ENCODE measurements at regions of chr4 and their contacts with region 1.

Region 1: GRCh38 chr4:168153596-168154440 is 61.5 kb downstream of the ANXA10 start:
- DNase-seq: peak; percentile 71
- H3K4me3 Mint-ChIP-seq: no peak overlapping the region
- H3K27ac Mint-ChIP-seq: no peak overlapping the region
- H3K4me1 Mint-ChIP-seq: no peaks in the 10 kb centered on the region
- H3K27me3 Mint-ChIP-seq: no peaks in the 10 kb centered on the region
- CTCF ChIP-seq: peak; percentile 65

Region 2: DNA sequence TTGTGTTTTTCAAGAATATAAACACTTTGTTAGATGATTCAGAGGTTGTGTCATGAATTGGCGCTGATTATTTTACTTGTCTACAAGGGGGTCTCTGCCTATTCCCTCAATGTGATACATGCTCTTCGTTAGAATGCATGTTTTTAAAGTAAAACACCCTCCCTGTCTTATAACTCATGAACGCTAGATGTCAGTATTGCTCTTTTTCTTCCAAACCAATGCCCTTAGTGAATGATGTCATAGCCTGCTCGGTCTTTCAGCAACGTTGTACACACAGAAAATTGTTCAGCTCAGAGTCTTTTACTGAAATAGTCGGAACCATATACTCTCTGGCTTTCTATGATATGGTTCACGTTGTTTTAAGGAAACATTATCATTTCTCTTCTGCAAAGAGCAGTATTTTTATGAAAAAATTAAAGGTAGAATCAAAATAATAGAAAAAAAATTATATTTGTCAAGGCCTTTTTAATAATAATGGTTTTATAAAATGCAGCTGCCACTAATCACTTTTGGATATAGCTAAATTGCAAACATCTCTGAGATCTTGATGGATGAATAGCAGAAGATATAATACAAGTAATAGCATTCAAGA is 1987.9 kb before region 1 on chr4:
- CTCF ChIA-PET with region 1: no interaction called
- POLR2A ChIA-PET with region 1: no interaction called
- intact Hi-C with region 1: loop called (anchors 5 kb)
- DNase-seq: peak; percentile 84
- H3K4me3 Mint-ChIP-seq: no peak overlapping the region
- H3K27ac Mint-ChIP-seq: no peak overlapping the region
- H3K4me1 Mint-ChIP-seq: peaks cover 6% of the 10 kb centered on the region
- H3K27me3 Mint-ChIP-seq: no peaks in the 10 kb centered on the region
- CTCF ChIP-seq: peak; percentile 79

Region 3: GRCh38 chr4:167290678-167291077 is 863.1 kb before region 1 on chr4:
- CTCF ChIA-PET with region 1: interaction called, 5 read pairs
- POLR2A ChIA-PET with region 1: no interaction called
- intact Hi-C with region 1: loop called (anchors 10 kb)
- DNase-seq: peak; percentile 33
- H3K4me3 Mint-ChIP-seq: no peak overlapping the region
- H3K27ac Mint-ChIP-seq: no peak overlapping the region
- H3K4me1 Mint-ChIP-seq: no peaks in the 10 kb centered on the region
- H3K27me3 Mint-ChIP-seq: no peaks in the 10 kb centered on the region
- CTCF ChIP-seq: peak; percentile 42

Region 4: GRCh38 chr4:167721617-167722486 is 432.0 kb before region 1 on chr4:
- CTCF ChIA-PET with region 1: interaction called, 3 read pairs
- POLR2A ChIA-PET with region 1: no interaction called
- intact Hi-C with region 1: loop called (anchors 10 kb)
- DNase-seq: no peak
- H3K4me3 Mint-ChIP-seq: no peak overlapping the region
- H3K27ac Mint-ChIP-seq: no peak overlapping the region
- H3K4me1 Mint-ChIP-seq: no peaks in the 10 kb centered on the region
- H3K27me3 Mint-ChIP-seq: no peaks in the 10 kb centered on the region
- CTCF ChIP-seq: no peak

Region 5: DNA sequence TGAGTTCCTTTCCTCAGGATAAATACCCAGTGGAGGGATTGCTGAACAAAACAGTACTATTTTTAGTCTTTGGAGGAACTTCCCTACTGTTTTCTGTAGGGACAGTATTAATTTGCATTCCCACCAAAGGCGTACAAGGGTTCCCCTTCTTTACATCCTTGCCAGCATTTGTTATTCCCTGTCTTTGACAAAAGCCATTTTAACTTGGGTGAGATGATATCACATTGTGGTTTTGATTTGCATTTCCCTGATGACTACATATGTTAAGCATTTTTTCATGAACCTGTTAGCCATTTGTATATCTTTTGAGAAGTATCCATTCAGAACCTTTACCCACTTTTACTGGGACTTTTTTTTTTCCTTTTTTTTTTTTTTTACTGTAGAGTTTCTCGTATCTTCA is 187.7 kb before region 1 on chr4:
- CTCF ChIA-PET with region 1: no interaction called
- POLR2A ChIA-PET with region 1: no interaction called
- intact Hi-C with region 1: no loop called
- DNase-seq: no peak
- H3K4me3 Mint-ChIP-seq: no peak overlapping the region
- H3K27ac Mint-ChIP-seq: no peak overlapping the region
- H3K4me1 Mint-ChIP-seq: no peaks in the 10 kb centered on the region
- H3K27me3 Mint-ChIP-seq: no peaks in the 10 kb centered on the region
- CTCF ChIP-seq: no peak

Region 6: GRCh38 chr4:168076989-168077725 is 76.7 kb before region 1 on chr4:
- CTCF ChIA-PET with region 1: interaction called, 7 read pairs
- POLR2A ChIA-PET with region 1: interaction called, 3 read pairs
- intact Hi-C with region 1: loop called (anchors 1 kb)
- DNase-seq: peak; percentile 76
- H3K4me3 Mint-ChIP-seq: no peak overlapping the region
- H3K27ac Mint-ChIP-seq: no peak overlapping the region
- H3K4me1 Mint-ChIP-seq: no peaks in the 10 kb centered on the region
- H3K27me3 Mint-ChIP-seq: no peaks in the 10 kb centered on the region
- CTCF ChIP-seq: peak; percentile 94

Region 7: GRCh38 chr4:168139336-168139735 is 14.5 kb before region 1 on chr4:
- CTCF ChIA-PET with region 1: interaction called, 19 read pairs
- POLR2A ChIA-PET with region 1: no interaction called
- intact Hi-C with region 1: no loop called
- DNase-seq: peak; percentile 29
- H3K4me3 Mint-ChIP-seq: no peak overlapping the region
- H3K27ac Mint-ChIP-seq: peak overlapping the region; percentile 60
- H3K4me1 Mint-ChIP-seq: peaks cover 16% of the 10 kb centered on the region
- H3K27me3 Mint-ChIP-seq: no peaks in the 10 kb centered on the region
- CTCF ChIP-seq: no peak

Region 8: GRCh38 chr4:168212656-168213055 is 58.8 kb after region 1 on chr4:
- CTCF ChIA-PET with region 1: no interaction called
- POLR2A ChIA-PET with region 1: no interaction called
- intact Hi-C with region 1: no loop called
- DNase-seq: no peak
- H3K4me3 Mint-ChIP-seq: no peak overlapping the region
- H3K27ac Mint-ChIP-seq: peak overlapping the region; percentile 44
- H3K4me1 Mint-ChIP-seq: no peaks in the 10 kb centered on the region
- H3K27me3 Mint-ChIP-seq: no peaks in the 10 kb centered on the region
- CTCF ChIP-seq: no peak

Region 9: DNA sequence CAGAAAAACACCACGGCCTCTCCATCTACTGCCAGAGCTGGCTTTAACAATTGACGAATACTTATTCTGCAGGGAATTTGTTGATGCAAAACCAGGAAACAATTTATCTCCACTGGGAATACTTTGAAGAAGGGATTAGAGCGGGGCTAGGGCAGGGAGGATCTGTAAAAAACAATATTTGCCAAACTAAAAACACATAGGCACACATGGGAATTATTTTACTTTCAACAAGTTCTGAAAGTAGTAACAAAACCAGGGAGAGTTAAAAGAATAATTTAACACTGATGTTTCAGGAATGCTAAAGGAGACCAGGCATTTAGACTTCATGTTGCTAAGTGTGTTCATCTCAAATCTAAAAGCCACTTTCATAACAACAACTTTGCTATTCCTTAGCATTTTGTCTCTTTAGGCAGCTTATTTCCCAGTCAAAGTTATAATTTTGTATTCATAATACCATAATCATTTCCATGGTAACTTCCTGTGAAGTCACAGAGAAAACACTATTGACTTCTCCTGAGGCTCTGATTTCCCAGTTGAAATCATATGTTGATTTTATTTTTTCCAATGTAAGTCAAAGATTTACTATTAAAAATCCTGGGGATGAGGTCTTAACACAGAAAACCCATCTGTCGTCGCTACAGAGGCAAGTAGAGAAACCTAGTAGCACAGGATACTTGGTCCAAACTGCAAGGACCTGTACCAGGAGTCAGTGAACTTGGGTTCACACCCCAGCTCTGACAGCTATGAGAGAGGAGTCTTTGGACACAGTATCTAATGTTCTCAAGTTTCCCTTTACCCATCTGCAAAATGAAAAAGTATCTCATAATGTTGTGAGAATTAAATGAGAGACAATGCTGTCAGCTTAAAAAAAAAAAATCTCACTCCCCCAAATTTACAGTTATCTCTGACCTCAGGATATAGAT is 1047.7 kb after region 1 on chr4:
- CTCF ChIA-PET with region 1: no interaction called
- POLR2A ChIA-PET with region 1: no interaction called
- intact Hi-C with region 1: no loop called
- DNase-seq: no peak
- H3K4me3 Mint-ChIP-seq: no peak overlapping the region
- H3K27ac Mint-ChIP-seq: no peak overlapping the region
- H3K4me1 Mint-ChIP-seq: peaks cover 18% of the 10 kb centered on the region
- H3K27me3 Mint-ChIP-seq: no peaks in the 10 kb centered on the region
- CTCF ChIP-seq: no peak